SK-N-SH (cell line): ENCODE measurements at regions of chr7 and their contacts with region 1.

Region 1: DNA sequence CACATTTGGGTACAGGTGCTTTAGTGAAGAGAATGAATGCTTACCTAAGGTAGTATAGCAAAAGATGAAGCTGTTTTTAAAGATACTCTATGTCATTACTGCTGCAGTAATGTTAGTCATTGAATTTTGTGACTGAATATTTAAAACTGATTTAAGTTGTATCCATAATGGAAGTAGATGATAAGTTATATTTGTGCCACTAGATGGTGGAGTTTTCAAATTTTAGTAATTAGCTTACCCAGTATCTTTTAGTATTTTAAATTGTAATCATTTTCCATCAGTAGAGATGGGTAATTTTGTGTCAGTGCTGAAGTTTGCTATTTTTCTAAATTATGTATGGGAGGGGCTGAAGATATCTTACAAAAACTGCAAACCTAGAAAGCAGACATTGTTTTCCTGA is 25.2 kb downstream of the HBP1 start:
- DNase-seq: no peak
- H3K4me3 ChIP-seq: no peak overlapping the region
- H3K27ac ChIP-seq: no peak overlapping the region; a peak in 1 of 4 replicates
- H3K4me1 ChIP-seq: no peaks in the 10 kb centered on the region
- H3K27me3 ChIP-seq: no peaks in the 10 kb centered on the region
- CTCF ChIP-seq: peak; percentile 54
- EP300 ChIP-seq: no peak
- RAD21 ChIP-seq: peak; percentile 27; the same call in 1 of the 2 replicates

Region 2: GRCh38 chr7:106905734-106906133 is 288.3 kb before region 1 on chr7:
- CTCF ChIA-PET with region 1: no interaction called
- POLR2A ChIA-PET with region 1: no interaction called
- DNase-seq: no peak
- H3K4me3 ChIP-seq: no peak overlapping the region
- H3K27ac ChIP-seq: no peak overlapping the region
- H3K4me1 ChIP-seq: peaks cover 0 to 4% of the 10 kb centered on the region in 2 experiments; a peak in 1 of 4 replicates
- H3K27me3 ChIP-seq: no peaks in the 10 kb centered on the region
- CTCF ChIP-seq: no peak
- EP300 ChIP-seq: no peak
- RAD21 ChIP-seq: no peak

Region 3: GRCh38 chr7:107180378-107180777 is 13.7 kb before region 1 on chr7:
- CTCF ChIA-PET with region 1: interaction called, 22 read pairs
- POLR2A ChIA-PET with region 1: no interaction called
- DNase-seq: no peak
- H3K4me3 ChIP-seq: no peak overlapping the region
- H3K27ac ChIP-seq: peak overlapping the region in 1 of 2 experiments; percentile 49; a peak in 2 of 4 replicates
- H3K4me1 ChIP-seq: peaks cover 0 to 18% of the 10 kb centered on the region in 2 experiments; a peak in 3 of 4 replicates
- H3K27me3 ChIP-seq: no peaks in the 10 kb centered on the region
- CTCF ChIP-seq: no peak
- EP300 ChIP-seq: no peak
- RAD21 ChIP-seq: no peak

Region 4: GRCh38 chr7:107208024-107208521 is 14.0 kb after region 1 on chr7:
- CTCF ChIA-PET with region 1: interaction called, 15 read pairs
- POLR2A ChIA-PET with region 1: no interaction called
- DNase-seq: no peak
- H3K4me3 ChIP-seq: no peak overlapping the region
- H3K27ac ChIP-seq: peak overlapping the region; percentile 6 to 44; a peak in 3 of 4 replicates
- H3K4me1 ChIP-seq: peaks cover 0 to 14% of the 10 kb centered on the region in 2 experiments; a peak in 2 of 4 replicates
- H3K27me3 ChIP-seq: no peaks in the 10 kb centered on the region
- CTCF ChIP-seq: no peak
- EP300 ChIP-seq: no peak
- RAD21 ChIP-seq: no peak